Activated CD8-positive, alpha-beta T cell treated with anti-CD3 and anti-CD28 coated beads, Interleukin-2, amount 10 ng/mL, durations not matched to agents 7 days and 5 days (primary cell): ENCODE measurements at regions of chr7 and their contacts with region 1.

Region 1: DNA sequence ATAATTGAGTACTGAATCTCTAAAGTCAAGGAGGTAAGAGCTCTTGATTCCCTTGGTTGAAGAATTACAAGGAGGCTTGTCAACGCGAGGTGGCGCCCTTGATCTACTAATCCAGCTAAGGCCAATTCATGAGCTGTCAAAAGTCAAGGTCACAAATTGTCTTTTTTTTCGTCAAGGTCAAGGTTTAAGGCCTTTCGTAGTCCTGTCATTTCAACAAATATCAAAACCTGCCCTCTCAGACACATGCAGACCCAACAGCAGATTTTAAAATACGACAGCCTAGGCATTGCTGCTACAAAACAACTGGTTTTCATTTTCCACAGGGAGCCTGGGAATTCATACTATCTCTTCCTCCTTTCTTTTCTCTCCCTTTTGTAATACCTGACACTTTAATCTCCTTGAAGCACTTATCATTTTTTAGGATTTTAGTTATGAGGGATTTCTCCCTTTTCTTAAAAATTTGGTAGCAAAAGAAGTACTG is 3.6 kb downstream of the HOXA13 start:
- DNase-seq: peak; percentile 85
- ATAC-seq: no peak
- H3K4me3 Mint-ChIP-seq: no peak overlapping the region
- H3K27ac Mint-ChIP-seq: no peak overlapping the region
- H3K4me1 Mint-ChIP-seq: peaks cover 28% of the 10 kb centered on the region
- H3K27me3 Mint-ChIP-seq: peaks cover 77% of the 10 kb centered on the region

Region 2: DNA sequence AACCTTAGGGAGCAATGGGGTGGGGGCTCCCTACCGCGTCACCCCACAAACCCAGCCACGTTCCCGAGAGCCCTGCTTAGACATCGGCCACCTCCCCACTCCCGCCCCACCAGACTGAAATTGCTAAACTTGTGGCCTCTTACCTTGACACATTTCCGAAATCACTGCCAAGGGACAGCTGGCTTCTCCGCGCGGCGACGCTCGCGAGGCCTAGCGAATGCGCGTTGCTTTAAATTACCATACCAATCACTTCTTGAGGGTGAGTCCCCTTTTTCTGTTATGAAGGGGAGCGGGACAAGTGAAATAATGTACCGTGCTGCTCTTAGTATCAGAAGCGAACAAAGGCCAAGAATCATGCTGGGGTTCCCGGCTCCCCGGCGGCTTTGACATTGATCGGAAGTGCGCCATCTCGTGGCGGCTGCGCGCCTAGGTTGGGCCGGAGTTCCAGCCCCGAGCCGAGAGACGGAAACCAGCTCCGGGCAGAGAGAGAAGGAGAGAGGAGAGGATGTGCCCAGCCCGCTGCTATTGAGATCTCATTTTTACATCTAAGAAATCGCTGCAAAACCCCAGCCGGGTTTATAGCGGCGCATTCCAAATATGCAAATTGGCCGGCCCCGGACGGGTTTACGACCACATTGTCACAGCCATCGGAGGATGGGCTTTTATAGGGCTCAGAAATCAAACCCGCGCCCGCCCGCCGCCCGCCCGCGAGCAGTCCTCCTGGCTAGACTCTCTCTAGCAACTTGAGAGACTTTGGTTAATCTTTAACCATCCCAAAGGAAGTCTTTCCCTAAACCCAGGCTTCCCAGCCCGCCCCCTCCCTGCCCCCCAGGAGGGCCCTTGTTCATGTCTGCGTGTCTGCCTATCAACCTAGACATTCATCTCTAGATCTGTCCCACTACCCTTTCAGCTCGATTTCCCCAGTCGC is 16.6 kb before region 1 on chr7:
- CTCF ChIA-PET with region 1: interaction called, 37 read pairs
- POLR2A ChIA-PET with region 1: no interaction called
- DNase-seq: peak; percentile 62
- ATAC-seq: peak; percentile 59
- H3K4me3 Mint-ChIP-seq: no peak overlapping the region
- H3K27ac Mint-ChIP-seq: no peak overlapping the region
- H3K4me1 Mint-ChIP-seq: peaks cover 15% of the 10 kb centered on the region
- H3K27me3 Mint-ChIP-seq: peaks cover 63% of the 10 kb centered on the region

Region 3: GRCh38 chr7:27576360-27576944 is 380.1 kb after region 1 on chr7:
- CTCF ChIA-PET with region 1: interaction called, 23 read pairs
- POLR2A ChIA-PET with region 1: no interaction called
- DNase-seq: no peak
- ATAC-seq: peak; percentile 49
- H3K4me3 Mint-ChIP-seq: no peak overlapping the region
- H3K27ac Mint-ChIP-seq: no peak overlapping the region
- H3K4me1 Mint-ChIP-seq: no peaks in the 10 kb centered on the region
- H3K27me3 Mint-ChIP-seq: no peaks in the 10 kb centered on the region

Region 4: GRCh38 chr7:27774717-27775328 is 578.5 kb after region 1 on chr7:
- CTCF ChIA-PET with region 1: interaction called, 16 read pairs
- POLR2A ChIA-PET with region 1: no interaction called
- DNase-seq: no peak
- ATAC-seq: no peak
- H3K4me3 Mint-ChIP-seq: no peak overlapping the region
- H3K27ac Mint-ChIP-seq: no peak overlapping the region
- H3K4me1 Mint-ChIP-seq: no peaks in the 10 kb centered on the region
- H3K27me3 Mint-ChIP-seq: no peaks in the 10 kb centered on the region

Region 5: GRCh38 chr7:28020302-28020940 is 824.1 kb after region 1 on chr7:
- CTCF ChIA-PET with region 1: interaction called, 20 read pairs
- POLR2A ChIA-PET with region 1: no interaction called
- DNase-seq: peak; percentile 53
- ATAC-seq: peak; percentile 80
- H3K4me3 Mint-ChIP-seq: no peak overlapping the region
- H3K27ac Mint-ChIP-seq: no peak overlapping the region
- H3K4me1 Mint-ChIP-seq: no peaks in the 10 kb centered on the region
- H3K27me3 Mint-ChIP-seq: no peaks in the 10 kb centered on the region